ENCODE measurements at regions of chr12 and their contacts with region 1.

Region 1: GRCh38 chr12:9673404-9674225 is 4.1 kb downstream of the CLEC2D start:
- DNase-seq: peak; percentile 81
- ATAC-seq: peak; percentile 29
- H3K4me3 Mint-ChIP-seq: peak overlapping the region; percentile 86
- H3K27ac Mint-ChIP-seq: peak overlapping the region; percentile 97
- H3K4me1 Mint-ChIP-seq: peaks cover 56% of the 10 kb centered on the region
- H3K27me3 Mint-ChIP-seq: no peaks in the 10 kb centered on the region

Region 2: DNA sequence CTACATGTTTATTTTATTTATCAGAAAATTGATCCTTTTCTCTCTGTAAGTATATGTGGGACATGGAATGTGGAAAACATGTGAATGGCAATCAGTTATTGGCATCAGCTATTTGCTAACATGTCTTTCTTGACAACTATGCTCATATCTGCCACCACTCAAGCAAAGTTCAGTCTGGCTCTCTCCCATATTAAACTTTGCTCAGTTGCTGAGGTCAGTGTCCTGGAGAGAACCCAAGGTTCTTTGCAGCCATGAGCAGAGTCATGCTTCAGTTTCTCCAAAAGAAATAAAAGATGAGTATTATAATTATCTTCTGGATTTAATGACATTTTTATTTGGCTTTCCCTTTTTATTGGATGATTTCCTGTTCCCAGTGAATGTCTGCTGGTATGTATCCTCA is 600.5 kb before region 1 on chr12:
- CTCF ChIA-PET with region 1: no interaction called
- POLR2A ChIA-PET with region 1: no interaction called
- DNase-seq: no peak
- ATAC-seq: no peak
- H3K4me3 Mint-ChIP-seq: no peak overlapping the region
- H3K27ac Mint-ChIP-seq: no peak overlapping the region
- H3K4me1 Mint-ChIP-seq: no peaks in the 10 kb centered on the region
- H3K27me3 Mint-ChIP-seq: peaks cover 10% of the 10 kb centered on the region

Region 3: DNA sequence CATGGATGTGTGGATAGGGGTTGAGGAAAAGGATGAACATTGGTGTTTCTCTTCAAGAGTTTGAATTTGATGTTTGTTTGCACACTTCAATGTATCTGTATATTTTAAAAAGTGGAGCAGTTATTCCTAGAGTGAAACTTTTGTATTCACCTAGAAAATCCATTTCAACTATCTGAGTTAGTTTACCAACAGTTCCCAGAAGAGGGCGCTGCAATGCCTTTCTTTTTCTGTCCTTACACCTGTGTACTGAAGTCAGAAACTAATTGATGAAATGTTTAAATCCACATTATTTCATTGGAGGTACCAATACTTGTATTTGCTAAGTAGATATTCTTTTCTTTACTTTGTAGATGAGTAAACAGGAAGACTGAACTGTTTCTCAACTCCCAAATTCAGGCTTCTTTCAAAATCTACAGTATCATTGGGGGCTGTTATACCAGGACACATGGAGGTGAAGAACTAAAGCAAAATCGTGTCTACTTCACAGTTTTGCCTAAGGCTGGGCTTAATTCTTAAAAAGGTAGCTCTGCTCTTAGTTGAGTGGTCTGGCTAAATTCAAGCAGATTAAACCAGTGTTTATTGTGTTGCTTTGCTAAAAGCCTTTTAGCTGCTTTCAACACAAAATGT is 39.3 kb before region 1 on chr12:
- CTCF ChIA-PET with region 1: interaction called, 18 read pairs
- POLR2A ChIA-PET with region 1: interaction called, 7 read pairs
- DNase-seq: peak; percentile 91
- ATAC-seq: peak; percentile 88
- H3K4me3 Mint-ChIP-seq: no peak overlapping the region
- H3K27ac Mint-ChIP-seq: peak overlapping the region; percentile 62
- H3K4me1 Mint-ChIP-seq: peaks cover 62% of the 10 kb centered on the region
- H3K27me3 Mint-ChIP-seq: no peaks in the 10 kb centered on the region

Region 4: DNA sequence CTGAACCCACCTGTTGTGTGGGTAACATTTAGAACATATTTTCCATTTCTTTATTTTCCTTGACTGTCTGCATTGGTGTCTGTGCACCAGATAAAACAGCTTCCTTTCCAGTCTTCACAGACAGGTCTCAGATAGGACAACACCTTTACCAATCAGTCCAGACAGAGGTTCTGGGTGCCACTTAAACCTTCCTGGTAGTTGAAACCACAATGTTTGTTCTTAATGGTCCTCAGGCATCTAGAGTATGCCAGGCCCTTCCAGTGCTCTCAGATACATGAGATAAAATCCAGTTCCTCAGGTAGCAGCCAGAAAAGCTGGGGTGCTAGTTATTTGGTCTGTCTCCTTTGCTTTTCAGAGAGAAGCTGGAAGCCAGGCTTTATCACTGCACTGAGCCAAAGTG is 11.1 kb before region 1 on chr12:
- CTCF ChIA-PET with region 1: interaction called, 6 read pairs
- POLR2A ChIA-PET with region 1: interaction called, 161 read pairs
- DNase-seq: peak; percentile 29
- ATAC-seq: peak; percentile 55
- H3K4me3 Mint-ChIP-seq: peak overlapping the region; percentile 7
- H3K27ac Mint-ChIP-seq: peak overlapping the region; percentile 82
- H3K4me1 Mint-ChIP-seq: peaks cover 85% of the 10 kb centered on the region
- H3K27me3 Mint-ChIP-seq: no peaks in the 10 kb centered on the region

Region 5: GRCh38 chr12:9707864-9708808 is 34.5 kb after region 1 on chr12:
- CTCF ChIA-PET with region 1: interaction called, 25 read pairs
- POLR2A ChIA-PET with region 1: interaction called, 9 read pairs
- DNase-seq: peak; percentile 81
- ATAC-seq: peak; percentile 84
- H3K4me3 Mint-ChIP-seq: peak overlapping the region; percentile 55
- H3K27ac Mint-ChIP-seq: peak overlapping the region; percentile 85
- H3K4me1 Mint-ChIP-seq: peaks cover 48% of the 10 kb centered on the region
- H3K27me3 Mint-ChIP-seq: no peaks in the 10 kb centered on the region

Region 6: DNA sequence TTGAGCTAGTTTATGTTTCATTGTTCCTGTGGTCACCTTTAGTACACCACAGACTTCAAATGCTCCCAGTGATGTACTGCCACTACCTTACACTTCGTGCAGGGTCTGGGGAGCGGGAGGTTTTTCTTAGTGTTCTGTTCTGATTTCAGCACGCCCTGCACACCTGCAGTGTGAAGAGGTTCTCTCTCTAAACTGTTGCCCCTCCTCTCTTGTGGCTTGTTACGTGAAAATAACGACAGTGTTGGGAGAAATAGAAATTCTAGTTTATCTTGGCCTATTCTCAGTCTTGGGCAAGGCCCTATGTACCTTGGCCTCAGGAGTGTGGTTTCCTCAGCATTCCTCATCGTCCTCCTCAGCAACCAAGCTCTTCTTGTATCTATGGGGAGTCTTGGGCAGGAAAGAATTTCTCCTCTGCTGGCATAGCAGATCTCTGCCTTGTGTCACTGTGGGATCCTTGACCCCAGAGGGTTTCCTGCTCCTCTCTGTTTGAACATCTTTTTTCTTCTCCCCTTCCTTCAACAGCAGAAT is 880.7 kb after region 1 on chr12:
- CTCF ChIA-PET with region 1: interaction called, 3 read pairs
- POLR2A ChIA-PET with region 1: interaction called, 12 read pairs
- DNase-seq: peak; percentile 77
- ATAC-seq: peak; percentile 58
- H3K4me3 Mint-ChIP-seq: peak overlapping the region; percentile 90
- H3K27ac Mint-ChIP-seq: peak overlapping the region; percentile 92
- H3K4me1 Mint-ChIP-seq: peaks cover 49% of the 10 kb centered on the region
- H3K27me3 Mint-ChIP-seq: no peaks in the 10 kb centered on the region